ENCODE measurements at regions of chr19 and their contacts with region 1.

Region 1: GRCh38 chr19:2962045-2962561 is 15.3 kb upstream of the TLE6 start:
- DNase-seq: peak; percentile 33 to 36
- H3K4me3 ChIP-seq: no peak overlapping the region
- H3K27ac ChIP-seq: no peak overlapping the region
- H3K4me1 ChIP-seq: no peaks in the 10 kb centered on the region
- H3K27me3 ChIP-seq: no peaks in the 10 kb centered on the region
- CTCF ChIP-seq: peak; percentile 85

Region 2: GRCh38 chr19:2691951-2692350 is 270.2 kb before region 1 on chr19:
- CTCF ChIA-PET with region 1: no interaction called
- POLR2A ChIA-PET with region 1: no interaction called
- intact Hi-C with region 1: no loop called
- DNase-seq: no peak
- H3K4me3 ChIP-seq: no peak overlapping the region
- H3K27ac ChIP-seq: no peak overlapping the region
- H3K4me1 ChIP-seq: no peaks in the 10 kb centered on the region
- H3K27me3 ChIP-seq: peaks cover 20% of the 10 kb centered on the region
- CTCF ChIP-seq: no peak

Region 3: GRCh38 chr19:2896694-2897093 is 65.4 kb before region 1 on chr19:
- CTCF ChIA-PET with region 1: no interaction called
- POLR2A ChIA-PET with region 1: no interaction called
- intact Hi-C with region 1: no loop called
- DNase-seq: no peak
- H3K4me3 ChIP-seq: no peak overlapping the region
- H3K27ac ChIP-seq: no peak overlapping the region
- H3K4me1 ChIP-seq: no peaks in the 10 kb centered on the region
- H3K27me3 ChIP-seq: no peaks in the 10 kb centered on the region
- CTCF ChIP-seq: no peak

Region 4: DNA sequence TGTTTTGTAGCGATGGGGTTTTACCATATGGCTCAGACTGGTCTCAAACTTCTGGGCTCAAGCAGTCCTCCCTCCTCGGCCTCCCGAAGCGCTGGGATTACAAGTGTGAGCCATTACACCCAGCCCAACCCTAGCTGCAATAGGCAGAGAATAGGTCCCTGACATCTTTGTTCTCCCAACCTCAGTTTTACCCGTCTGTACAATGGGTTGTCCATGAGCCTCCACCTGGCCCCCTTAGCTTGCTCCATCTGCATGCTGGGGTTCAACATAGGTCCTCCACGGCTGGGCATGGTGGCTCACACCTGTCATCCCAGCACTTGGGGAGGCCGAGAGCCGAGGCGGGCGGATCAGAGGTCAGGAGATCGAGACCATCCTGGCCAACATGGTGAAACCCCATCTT is 418.7 kb after region 1 on chr19:
- CTCF ChIA-PET with region 1: interaction called, 10 read pairs
- POLR2A ChIA-PET with region 1: no interaction called
- intact Hi-C with region 1: no loop called
- DNase-seq: no peak
- H3K4me3 ChIP-seq: no peak overlapping the region
- H3K27ac ChIP-seq: no peak overlapping the region
- H3K4me1 ChIP-seq: no peaks in the 10 kb centered on the region
- H3K27me3 ChIP-seq: no peaks in the 10 kb centered on the region
- CTCF ChIP-seq: no peak